Heart right ventricle (tissue), 16 donors: ENCODE measurements at regions of chr1 and their contacts with region 1.

Region 1: DNA sequence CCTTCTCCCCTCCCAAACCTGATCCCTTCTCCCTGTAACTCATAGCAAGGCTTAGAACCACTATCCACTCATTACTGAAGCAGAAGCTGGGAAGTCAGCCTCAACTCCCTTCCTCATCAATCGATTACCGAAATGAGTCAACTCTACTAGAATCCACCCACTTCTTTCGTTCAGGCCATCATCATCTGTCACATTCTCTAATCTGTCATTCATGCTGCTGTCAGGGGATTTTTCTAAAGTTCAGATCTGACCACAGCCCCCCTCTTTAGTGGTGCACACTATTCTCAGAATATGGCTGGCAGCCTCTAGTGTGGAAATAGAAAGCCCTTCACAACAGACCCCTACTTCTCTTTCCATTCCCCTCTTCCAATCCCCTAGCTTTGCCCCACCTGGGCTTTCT is 5.1 kb downstream of the NT5C1A start:
- DNase-seq: no peak
- ATAC-seq: no peak
- H3K4me3 ChIP-seq: no peak overlapping the region
- H3K27ac ChIP-seq: no peak overlapping the region
- H3K4me1 ChIP-seq: peaks cover 0 to 44% (median 28%) of the 10 kb centered on the region in 9 donors
- H3K27me3 ChIP-seq: peaks cover 0 to 17% (median 7%) of the 10 kb centered on the region in 7 donors
- CTCF ChIP-seq: no peak

Region 2: GRCh38 chr1:39711104-39711965 is 44.6 kb after region 1 on chr1:
- intact Hi-C with region 1: loop called in 2 of 10 experiments (anchors 5 to 10 kb)
- DNase-seq: no peak
- ATAC-seq: no peak
- H3K4me3 ChIP-seq: no peak overlapping the region
- H3K27ac ChIP-seq: no peak overlapping the region
- H3K4me1 ChIP-seq: peaks cover 0 to 3% (median 0%) of the 10 kb centered on the region in 9 donors
- H3K27me3 ChIP-seq: peaks cover 0 to 21% (median 17%) of the 10 kb centered on the region in 7 donors
- CTCF ChIP-seq: no peak